ENCODE measurements at regions of chr20 and their contacts with region 1.

Region 1: DNA sequence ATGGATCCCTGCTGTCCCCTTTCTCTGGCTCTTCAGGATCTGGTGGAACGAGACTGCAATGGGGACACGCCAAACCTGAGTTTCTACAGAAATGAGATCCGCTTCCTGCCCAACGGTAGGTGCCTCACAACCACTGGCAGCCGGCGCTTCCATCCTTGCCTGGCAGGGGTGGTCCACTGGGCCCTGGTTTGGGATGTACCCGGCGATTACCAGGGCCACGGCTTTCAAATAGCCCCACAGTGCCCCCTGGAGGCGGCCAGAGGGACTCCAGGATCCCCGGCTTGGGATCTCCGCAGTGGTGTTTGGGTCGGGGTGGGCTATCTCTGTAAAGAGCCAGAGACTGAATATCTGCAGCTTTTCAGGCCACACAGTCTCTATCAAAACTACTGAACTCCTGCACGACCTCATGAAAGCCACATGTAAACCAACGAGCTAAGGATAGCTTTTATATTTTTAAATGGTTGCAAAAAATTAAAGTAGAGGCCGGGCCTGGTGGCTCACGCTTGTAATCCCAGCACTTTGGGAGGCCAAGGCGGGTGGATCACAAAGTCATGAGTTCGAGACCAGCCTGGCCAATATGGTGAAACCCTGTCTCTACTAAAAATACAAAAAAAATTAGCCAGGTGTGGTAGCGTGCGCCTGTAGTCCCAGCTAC is 3.7 kb downstream of the OGFR start:
- DNase-seq: peak; percentile 78
- ATAC-seq: peak; percentile 50
- H3K4me3 Mint-ChIP-seq: no peak overlapping the region
- H3K27ac Mint-ChIP-seq: peak overlapping the region; percentile 52
- H3K4me1 Mint-ChIP-seq: peaks cover 28% of the 10 kb centered on the region
- H3K27me3 Mint-ChIP-seq: no peaks in the 10 kb centered on the region

Region 2: GRCh38 chr20:62740286-62741141 is 67.8 kb before region 1 on chr20:
- CTCF ChIA-PET with region 1: interaction called, 19 read pairs
- DNase-seq: peak; percentile 97
- ATAC-seq: peak; percentile 77
- H3K4me3 Mint-ChIP-seq: peak overlapping the region; percentile 70
- H3K27ac Mint-ChIP-seq: peak overlapping the region; percentile 99
- H3K4me1 Mint-ChIP-seq: peaks cover 56% of the 10 kb centered on the region
- H3K27me3 Mint-ChIP-seq: peaks cover 25% of the 10 kb centered on the region

Region 3: DNA sequence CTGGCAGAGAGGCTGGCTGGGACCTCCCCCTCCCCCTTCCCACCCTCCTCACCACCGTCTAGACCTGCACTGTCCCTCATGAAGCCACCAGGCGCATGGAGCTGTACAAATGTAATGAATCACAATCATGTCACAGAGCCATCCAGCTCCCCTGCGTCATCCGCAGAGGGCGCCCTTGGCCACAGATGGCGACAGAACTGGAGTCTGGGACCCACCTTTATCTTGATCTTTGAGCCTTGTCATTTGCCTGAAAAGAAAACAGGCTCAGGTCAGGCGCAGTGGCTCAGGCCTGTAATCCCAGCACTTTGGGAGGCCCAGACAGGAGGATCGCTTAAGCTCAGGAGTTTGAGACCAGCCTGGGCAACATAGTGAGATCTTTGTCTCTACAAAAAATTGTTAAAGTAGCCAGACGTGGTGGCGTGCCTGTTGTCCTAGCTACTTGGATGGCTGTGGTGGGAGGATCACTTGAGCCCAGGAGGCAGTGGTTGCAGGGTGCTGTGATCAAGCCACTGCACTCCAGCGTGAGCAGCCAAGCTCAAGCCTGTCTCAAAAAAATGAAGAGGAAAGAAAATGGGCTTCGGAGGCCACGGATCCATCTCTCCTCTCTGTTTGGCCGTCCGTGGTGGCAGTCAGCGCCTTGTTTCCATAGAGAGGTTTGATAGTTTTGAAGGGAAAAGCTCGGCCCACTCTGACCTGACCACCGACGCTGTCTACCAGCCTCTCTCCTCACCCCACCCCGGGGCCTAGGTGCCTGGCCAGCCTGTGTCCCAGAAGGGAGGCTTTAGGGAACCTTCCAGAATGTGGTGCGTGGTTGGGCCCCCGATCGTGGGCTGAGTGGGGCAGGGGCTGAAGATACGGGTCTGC is 14.7 kb after region 1 on chr20:
- CTCF ChIA-PET with region 1: interaction called, 11 read pairs
- DNase-seq: peak; percentile 73
- ATAC-seq: peak; percentile 69
- H3K4me3 Mint-ChIP-seq: no peak overlapping the region
- H3K27ac Mint-ChIP-seq: no peak overlapping the region
- H3K4me1 Mint-ChIP-seq: no peaks in the 10 kb centered on the region
- H3K27me3 Mint-ChIP-seq: peaks cover 6% of the 10 kb centered on the region

Region 4: GRCh38 chr20:62961310-62961783 is 153.0 kb after region 1 on chr20:
- CTCF ChIA-PET with region 1: no interaction called
- DNase-seq: no peak
- ATAC-seq: no peak
- H3K4me3 Mint-ChIP-seq: no peak overlapping the region
- H3K27ac Mint-ChIP-seq: no peak overlapping the region
- H3K4me1 Mint-ChIP-seq: peaks cover 5% of the 10 kb centered on the region
- H3K27me3 Mint-ChIP-seq: no peaks in the 10 kb centered on the region

Region 5: GRCh38 chr20:63116412-63117099 is 308.2 kb after region 1 on chr20:
- CTCF ChIA-PET with region 1: no interaction called
- DNase-seq: no peak
- ATAC-seq: no peak
- H3K4me3 Mint-ChIP-seq: no peak overlapping the region
- H3K27ac Mint-ChIP-seq: no peak overlapping the region
- H3K4me1 Mint-ChIP-seq: no peaks in the 10 kb centered on the region
- H3K27me3 Mint-ChIP-seq: peaks cover 17% of the 10 kb centered on the region